Naive thymus-derived CD4-positive, alpha-beta T cell (primary cell): ENCODE measurements at regions of chr17 and their contacts with region 1.

Region 1: GRCh38 chr17:30134551-30134950 is 17.9 kb downstream of the NSRP1 start:
- DNase-seq: no peak
- ATAC-seq: no peak
- H3K4me3 ChIP-seq: no peak overlapping the region
- H3K4me3 Mint-ChIP-seq: no peak overlapping the region
- H3K27ac ChIP-seq: no peak overlapping the region
- H3K27ac Mint-ChIP-seq: no peak overlapping the region
- H3K4me1 ChIP-seq: no peaks in the 10 kb centered on the region
- H3K4me1 Mint-ChIP-seq: peaks cover 6 to 46% (median 36%) of the 10 kb centered on the region in 7 donors
- H3K27me3 ChIP-seq: no peaks in the 10 kb centered on the region
- H3K27me3 Mint-ChIP-seq: no peaks in the 10 kb centered on the region

Region 2: DNA sequence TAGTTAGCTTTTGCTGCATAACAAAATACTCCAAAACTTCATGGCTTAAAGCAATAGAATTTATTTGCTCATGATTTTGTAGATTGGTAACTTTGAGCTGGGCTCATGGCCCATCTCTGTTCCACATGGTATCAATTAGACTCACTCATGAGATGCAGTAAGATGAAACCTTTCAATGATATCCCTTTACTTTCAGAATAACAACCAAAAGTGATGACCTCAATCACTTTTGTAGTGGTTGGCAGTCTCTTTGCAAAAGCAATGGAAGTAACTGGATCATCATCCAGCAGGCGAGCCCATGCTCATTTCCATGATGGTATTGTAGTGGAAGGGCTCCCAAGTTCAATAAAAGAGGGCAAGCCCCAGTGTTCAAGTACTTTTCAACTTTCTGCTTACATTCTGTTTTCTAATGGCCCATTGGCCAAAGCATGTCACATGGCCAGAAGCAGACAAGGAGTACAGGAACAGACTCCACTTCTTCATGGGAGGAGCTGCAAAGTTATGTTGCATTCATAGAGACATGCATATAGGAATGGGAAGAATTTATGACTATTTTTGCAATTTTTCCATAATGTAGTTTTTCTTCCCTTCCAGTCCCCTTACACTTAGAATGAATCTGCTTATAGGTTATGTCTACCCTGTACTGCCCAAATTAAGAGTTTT is 151.4 kb before region 1 on chr17:
- CTCF ChIA-PET with region 1: no interaction called
- POLR2A ChIA-PET with region 1: no interaction called
- intact Hi-C with region 1: no loop called
- DNase-seq: no peak
- ATAC-seq: no peak
- H3K4me3 ChIP-seq: no peak overlapping the region
- H3K4me3 Mint-ChIP-seq: no peak overlapping the region
- H3K27ac ChIP-seq: no peak overlapping the region
- H3K27ac Mint-ChIP-seq: no peak overlapping the region
- H3K4me1 ChIP-seq: no peaks in the 10 kb centered on the region
- H3K4me1 Mint-ChIP-seq: no peaks in the 10 kb centered on the region
- H3K27me3 ChIP-seq: no peaks in the 10 kb centered on the region
- H3K27me3 Mint-ChIP-seq: peaks cover 0 to 10% (median 4%) of the 10 kb centered on the region in 5 donors

Region 3: DNA sequence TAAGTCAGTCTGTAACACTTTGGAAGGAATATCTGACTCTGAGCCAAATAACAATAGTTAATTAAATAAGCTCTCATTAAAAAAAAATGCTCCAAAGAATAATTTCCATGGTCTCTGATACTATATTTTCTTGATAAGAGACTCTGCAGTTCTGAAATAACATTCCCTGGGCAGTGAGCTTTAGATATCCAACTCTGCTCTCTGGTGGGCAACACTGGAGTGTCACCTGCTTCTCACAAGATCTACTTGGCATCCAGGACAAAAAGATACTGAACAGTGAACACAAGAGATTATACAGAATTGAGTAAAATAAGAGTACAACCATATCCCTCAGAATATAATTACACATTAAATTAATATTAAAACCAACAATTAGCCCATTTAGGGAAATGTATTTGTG is 143.5 kb after region 1 on chr17:
- CTCF ChIA-PET with region 1: no interaction called
- POLR2A ChIA-PET with region 1: interaction called, 4 read pairs
- intact Hi-C with region 1: loop called in 1 of 2 experiments (anchors 5 kb)
- DNase-seq: peak in 1 of 9 donors; percentile 6
- ATAC-seq: no peak
- H3K4me3 ChIP-seq: no peak overlapping the region
- H3K4me3 Mint-ChIP-seq: no peak overlapping the region
- H3K27ac ChIP-seq: no peak overlapping the region
- H3K27ac Mint-ChIP-seq: peak overlapping the region in 2 of 9 donors; percentile 2 to 32
- H3K4me1 ChIP-seq: no peaks in the 10 kb centered on the region
- H3K4me1 Mint-ChIP-seq: peaks cover 0 to 6% (median 0%) of the 10 kb centered on the region in 7 donors
- H3K27me3 ChIP-seq: no peaks in the 10 kb centered on the region
- H3K27me3 Mint-ChIP-seq: no peaks in the 10 kb centered on the region